Lower leg skin (tissue), 4 donors: ENCODE measurements at regions of chr2 and their contacts with region 1.

Region 1: GRCh38 chr2:4420032-4420431 is 716.7 kb downstream of the DCDC2C start:
- DNase-seq: no peak
- H3K4me3 ChIP-seq: no peak overlapping the region
- CTCF ChIP-seq: no peak
- POLR2A ChIP-seq: no peak

Region 2: GRCh38 chr2:4090700-4091630 is 329.1 kb before region 1 on chr2:
- intact Hi-C with region 1: no loop called
- DNase-seq: no peak
- H3K4me3 ChIP-seq: no peak overlapping the region
- CTCF ChIP-seq: no peak
- POLR2A ChIP-seq: no peak

Region 3: DNA sequence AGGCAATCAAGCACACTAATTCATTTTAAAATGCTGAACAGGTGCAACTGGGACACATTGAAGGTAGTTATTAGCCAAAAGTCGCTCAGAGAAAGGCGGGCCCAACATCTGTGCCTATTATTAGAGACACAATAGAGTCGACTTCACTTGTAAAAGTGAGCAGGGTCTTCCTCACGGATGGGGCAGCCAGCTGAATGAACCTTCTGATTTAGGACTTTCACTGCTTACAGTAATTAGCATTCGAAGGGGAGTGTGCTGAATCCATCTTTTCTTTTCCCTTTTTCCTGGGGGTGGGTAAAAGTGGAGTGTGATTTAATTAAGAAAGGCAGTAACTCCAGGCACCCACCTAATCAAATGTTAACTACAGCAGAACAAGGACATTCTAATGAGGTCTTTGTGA is 39.0 kb before region 1 on chr2:
- intact Hi-C with region 1: loop called (anchors 1 kb)
- DNase-seq: no peak
- H3K4me3 ChIP-seq: no peak overlapping the region
- CTCF ChIP-seq: no peak
- POLR2A ChIP-seq: no peak